Right lobe of liver (tissue), 6 donors: ENCODE measurements at regions of chr19 and their contacts with region 1.

Region 1: DNA sequence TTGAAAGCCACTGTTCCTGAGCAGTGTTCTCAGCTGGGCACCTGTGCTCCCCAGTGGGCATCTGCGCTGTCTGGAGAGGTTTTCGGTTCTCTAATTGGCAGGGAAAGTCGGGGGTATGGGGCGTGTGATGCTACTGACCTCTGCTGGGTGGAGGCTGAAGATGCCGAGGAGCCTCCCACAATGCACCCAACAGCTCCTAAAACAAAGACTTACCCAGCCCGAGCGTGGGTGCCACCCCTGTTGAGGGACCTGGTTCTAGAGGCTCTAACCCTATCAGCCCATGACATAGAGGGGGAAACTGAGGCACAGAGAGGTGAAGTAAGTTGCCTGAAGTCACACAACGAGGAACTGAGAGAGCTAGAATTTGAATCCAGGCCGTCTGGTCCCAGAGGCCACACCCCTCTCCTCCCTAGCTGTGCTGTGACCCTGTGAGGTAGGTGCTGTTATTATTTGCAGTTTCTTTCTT is 2.3 kb downstream of the SPACA4 start:
- DNase-seq: no peak
- ATAC-seq: peak; percentile 22 to 39 (median 32)
- H3K4me3 ChIP-seq: no peak overlapping the region
- H3K27ac ChIP-seq: no peak overlapping the region
- H3K4me1 ChIP-seq: peaks cover 0 to 3% (median 0%) of the 10 kb centered on the region in 4 donors
- H3K27me3 ChIP-seq: no peaks in the 10 kb centered on the region
- CTCF ChIP-seq: peak; percentile 4 to 37 (median 28)
- POLR2A ChIP-seq: no peak

Region 2: GRCh38 chr19:48310227-48310626 is 298.6 kb before region 1 on chr19:
- intact Hi-C with region 1: loop called in 1 of 2 experiments (anchors 10 kb)
- DNase-seq: no peak
- ATAC-seq: peak; percentile 29 to 79 (median 70)
- H3K4me3 ChIP-seq: no peak overlapping the region
- H3K27ac ChIP-seq: no peak overlapping the region
- H3K4me1 ChIP-seq: no peaks in the 10 kb centered on the region
- H3K27me3 ChIP-seq: no peaks in the 10 kb centered on the region
- CTCF ChIP-seq: no peak
- POLR2A ChIP-seq: no peak

Region 3: DNA sequence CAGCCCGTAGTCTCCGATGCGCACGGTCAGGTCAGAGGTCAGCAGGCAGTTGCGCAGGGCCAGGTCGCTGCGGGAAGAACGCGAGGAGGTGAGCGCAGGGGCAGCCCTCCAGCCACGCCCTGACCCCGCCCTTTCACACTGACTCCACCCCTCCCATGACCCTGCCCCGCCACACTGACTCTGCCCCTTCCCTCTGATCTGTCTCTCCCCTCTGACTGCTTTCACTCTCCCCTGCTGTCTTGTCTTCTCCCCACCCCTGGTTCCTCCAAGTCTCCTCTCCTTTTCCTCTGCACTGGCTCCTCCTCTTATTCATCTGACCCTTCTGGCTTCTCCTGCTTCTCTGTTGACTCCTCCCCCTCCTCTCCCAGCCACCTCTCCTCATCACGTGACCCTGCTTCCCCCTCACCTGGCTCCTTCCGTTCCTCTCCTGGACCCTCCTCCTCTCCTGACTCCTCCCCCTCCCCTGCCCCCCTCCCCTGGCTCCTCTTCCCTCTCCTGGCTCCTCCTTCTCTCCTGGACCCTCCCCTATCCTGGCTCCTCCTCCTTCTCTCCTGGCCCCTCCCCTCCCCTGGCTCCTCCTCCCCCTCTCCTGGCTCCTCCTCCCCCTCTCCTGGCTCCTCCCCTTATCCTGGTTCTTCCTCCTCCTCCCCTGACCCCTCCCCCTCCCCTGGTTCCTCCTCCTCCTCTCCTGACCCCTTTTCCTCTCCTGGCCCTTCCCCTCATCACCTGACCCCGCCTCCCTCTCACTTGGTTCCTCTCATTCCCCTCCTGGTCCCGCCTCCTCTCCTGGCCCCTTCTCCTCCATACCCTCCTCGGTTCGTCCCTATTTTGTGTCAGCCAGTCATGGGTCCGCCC is 107.1 kb before region 1 on chr19:
- intact Hi-C with region 1: loop called in 1 of 2 experiments (anchors 10 kb)
- DNase-seq: peak in 2 of 3 donors; percentile 43 to 65
- ATAC-seq: peak; percentile 57 to 71 (median 66)
- H3K4me3 ChIP-seq: no peak overlapping the region
- H3K27ac ChIP-seq: no peak overlapping the region
- H3K4me1 ChIP-seq: no peaks in the 10 kb centered on the region
- H3K27me3 ChIP-seq: no peaks in the 10 kb centered on the region
- CTCF ChIP-seq: no peak
- POLR2A ChIP-seq: no peak